Activated B cell treated with CpG ODN at 0.5 μM for 24 hours (primary cell): ENCODE measurements at regions of chr7 and their contacts with region 1.

Region 1: GRCh38 chr7:100081535-100082102 is at the start of gene ZNF3:
- DNase-seq: peak; percentile 96
- ATAC-seq: peak; percentile 80
- H3K4me3 Mint-ChIP-seq: peak within 1 kb of the TSS; percentile 89
- H3K27ac Mint-ChIP-seq: peak within 1 kb of the TSS; percentile 91
- H3K4me1 Mint-ChIP-seq: peaks cover 34% of the 10 kb centered on the region
- H3K27me3 Mint-ChIP-seq: no peaks in the 10 kb centered on the region
- CTCF ChIP-seq: peak; percentile 58
- total RNA-seq, gene ZNF3: 33.9 and 39.6 TPM in 2 replicates

Region 2: GRCh38 chr7:99504603-99505323 is 576.9 kb before region 1 on chr7 and contains the start of gene ZKSCAN5:
- CTCF ChIA-PET with region 1: no interaction called
- POLR2A ChIA-PET with region 1: interaction called, 3 read pairs
- intact Hi-C with region 1: loop called (anchors 2 kb)
- DNase-seq: peak; percentile 93
- ATAC-seq: peak; percentile 84
- H3K4me3 Mint-ChIP-seq: peak within 1 kb of the TSS; percentile 98
- H3K27ac Mint-ChIP-seq: peak within 1 kb of the TSS; percentile 98
- H3K4me1 Mint-ChIP-seq: peaks cover 38% of the 10 kb centered on the region
- H3K27me3 Mint-ChIP-seq: no peaks in the 10 kb centered on the region
- CTCF ChIP-seq: no peak
- total RNA-seq, gene ZKSCAN5: 9.5 and 10.3 TPM in 2 replicates

Region 3: DNA sequence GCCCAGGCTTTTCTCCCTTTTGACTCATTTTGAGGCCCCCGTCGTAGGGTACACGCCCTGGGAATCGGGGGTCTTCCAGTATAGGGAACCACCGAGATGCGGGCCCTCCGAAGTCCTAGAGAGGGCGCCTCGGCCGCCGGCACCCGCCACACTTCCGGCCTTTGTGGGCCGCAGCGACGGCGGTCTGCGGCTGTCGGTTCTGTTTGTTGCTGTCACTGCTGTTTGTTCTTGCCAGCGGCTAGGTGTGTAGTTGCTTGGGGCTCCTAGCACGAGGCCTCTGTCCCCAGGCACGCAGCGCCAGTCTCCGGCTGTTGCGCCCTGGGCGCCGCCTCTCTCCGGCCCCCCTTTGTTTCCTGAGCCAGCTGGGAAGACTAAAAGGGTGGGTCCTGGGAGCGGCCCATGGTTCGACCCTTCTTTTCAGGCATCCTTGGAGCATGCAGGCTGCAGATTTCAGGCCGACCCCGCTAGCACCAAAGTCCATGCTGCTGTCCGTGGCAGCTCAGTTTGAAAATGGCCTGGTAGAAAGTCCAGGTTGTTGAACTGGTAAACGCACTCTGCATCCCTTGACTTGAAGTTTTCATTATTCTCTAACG is 84.0 kb before region 1 on chr7:
- CTCF ChIA-PET with region 1: no interaction called
- POLR2A ChIA-PET with region 1: interaction called, 4 read pairs
- intact Hi-C with region 1: loop called (anchors 1 kb)
- DNase-seq: peak; percentile 60
- ATAC-seq: peak; percentile 92
- H3K4me3 Mint-ChIP-seq: peak overlapping the region; percentile 80
- H3K27ac Mint-ChIP-seq: peak overlapping the region; percentile 85
- H3K4me1 Mint-ChIP-seq: peaks cover 12% of the 10 kb centered on the region
- H3K27me3 Mint-ChIP-seq: peaks cover 1% of the 10 kb centered on the region
- CTCF ChIP-seq: no peak

Region 4: DNA sequence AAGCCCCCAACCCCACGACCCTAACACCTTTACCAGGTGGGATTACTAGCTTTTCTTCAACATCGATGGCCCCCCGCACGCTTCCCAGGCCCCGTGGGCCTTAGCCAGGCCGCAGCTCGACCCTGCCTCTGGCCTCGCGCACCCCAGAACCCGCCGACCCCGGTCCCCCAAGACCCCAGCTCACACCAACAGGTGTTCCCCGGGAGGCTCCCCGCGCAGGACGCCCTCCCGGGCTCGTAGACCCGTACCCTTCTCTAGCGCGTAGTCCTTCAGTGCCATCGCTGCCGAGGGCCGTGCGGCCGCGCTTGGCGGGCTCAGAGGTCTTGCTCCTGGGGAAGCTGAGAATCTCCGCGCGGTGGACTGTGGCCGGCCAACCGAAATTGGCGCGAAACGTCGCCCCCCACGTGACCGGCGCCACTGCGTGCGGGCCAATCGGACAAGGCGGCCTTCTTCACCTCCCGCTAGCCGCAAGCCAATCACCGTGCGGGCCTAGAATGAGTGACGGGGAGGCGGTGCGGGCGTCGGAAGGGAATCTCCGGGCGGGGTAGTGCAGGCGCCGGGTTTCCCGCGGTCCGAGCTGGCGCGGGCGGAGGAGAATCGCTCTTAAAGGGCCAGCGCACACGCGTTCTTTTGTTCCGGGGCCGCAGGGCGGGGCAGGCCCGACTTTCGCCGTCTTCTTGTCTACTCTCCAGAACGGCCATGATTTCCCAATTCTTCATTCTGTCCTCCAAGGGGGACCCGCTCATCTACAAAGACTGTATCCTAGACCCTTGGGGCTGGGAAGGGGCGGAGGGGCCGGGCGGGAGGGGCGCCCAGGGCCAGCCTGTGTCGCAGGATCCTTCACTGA is 19.6 kb after region 1 on chr7 and contains the starts of genes AP4M1 and MCM7:
- CTCF ChIA-PET with region 1: interaction called, 3 read pairs
- POLR2A ChIA-PET with region 1: interaction called, 64 read pairs
- intact Hi-C with region 1: loop called (anchors 1 kb)
- DNase-seq: peak; percentile 92
- ATAC-seq: peak; percentile 86
- H3K4me3 Mint-ChIP-seq: peak within 1 kb of the TSS; percentile 92
- H3K27ac Mint-ChIP-seq: peak within 1 kb of the TSS; percentile 87
- H3K4me1 Mint-ChIP-seq: peaks cover 32% of the 10 kb centered on the region
- H3K27me3 Mint-ChIP-seq: no peaks in the 10 kb centered on the region
- CTCF ChIP-seq: no peak
- total RNA-seq, gene AP4M1: 11.1 and 12.5 TPM in 2 replicates
- total RNA-seq, gene MCM7: 99.7 and 104 TPM in 2 replicates

Region 5: GRCh38 chr7:100132697-100133151 is 51.1 kb after region 1 on chr7:
- CTCF ChIA-PET with region 1: interaction called, 5 read pairs
- POLR2A ChIA-PET with region 1: interaction called, 4 read pairs
- intact Hi-C with region 1: loop called (anchors 1 kb)
- DNase-seq: peak; percentile 50
- ATAC-seq: peak; percentile 89
- H3K4me3 Mint-ChIP-seq: no peak overlapping the region
- H3K27ac Mint-ChIP-seq: no peak overlapping the region
- H3K4me1 Mint-ChIP-seq: peaks cover 18% of the 10 kb centered on the region
- H3K27me3 Mint-ChIP-seq: no peaks in the 10 kb centered on the region
- CTCF ChIP-seq: peak; percentile 92

Region 6: DNA sequence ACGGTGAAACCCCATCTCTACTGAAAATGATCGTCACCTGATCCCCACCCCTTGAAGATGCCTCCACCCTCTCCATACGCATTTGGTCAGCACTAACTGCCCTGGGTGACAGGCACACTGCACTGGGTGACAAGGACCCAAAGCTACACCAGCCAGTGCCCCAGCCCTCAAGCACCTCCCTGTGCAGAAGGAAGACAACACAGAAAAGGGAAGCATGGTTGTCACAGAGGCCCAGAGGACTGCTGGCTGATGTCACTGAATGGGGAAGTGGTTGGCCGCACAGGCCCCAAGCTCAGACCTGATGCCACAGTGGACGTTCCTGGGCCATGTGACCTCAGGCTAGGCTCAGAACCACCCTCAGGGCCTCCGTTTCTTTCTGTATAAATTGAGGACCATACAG is 287.5 kb after region 1 on chr7:
- CTCF ChIA-PET with region 1: no interaction called
- POLR2A ChIA-PET with region 1: interaction called, 7 read pairs
- intact Hi-C with region 1: loop called (anchors 1 kb)
- DNase-seq: peak; percentile 69
- ATAC-seq: peak; percentile 80
- H3K4me3 Mint-ChIP-seq: peak overlapping the region; percentile 44
- H3K27ac Mint-ChIP-seq: peak overlapping the region; percentile 91
- H3K4me1 Mint-ChIP-seq: peaks cover 92% of the 10 kb centered on the region
- H3K27me3 Mint-ChIP-seq: no peaks in the 10 kb centered on the region
- CTCF ChIP-seq: no peak

Region 7: GRCh38 chr7:101251871-101252659 is 1170.4 kb after region 1 on chr7:
- CTCF ChIA-PET with region 1: no interaction called
- POLR2A ChIA-PET with region 1: no interaction called
- intact Hi-C with region 1: loop called (anchors 10 kb)
- DNase-seq: peak; percentile 98
- ATAC-seq: peak; percentile 100
- H3K4me3 Mint-ChIP-seq: peak overlapping the region; percentile 100
- H3K27ac Mint-ChIP-seq: peak overlapping the region; percentile 96
- H3K4me1 Mint-ChIP-seq: peaks cover 29% of the 10 kb centered on the region
- H3K27me3 Mint-ChIP-seq: peaks cover 8% of the 10 kb centered on the region
- CTCF ChIP-seq: no peak